ENCODE measurements at regions of chr5 and their contacts with region 1.

Region 1: GRCh38 chr5:56270568-56271392 is 37.6 kb upstream of the ANKRD55 start:
- DNase-seq: peak; percentile 82
- H3K4me3 Mint-ChIP-seq: no peak overlapping the region
- H3K27ac Mint-ChIP-seq: peak overlapping the region; percentile 0
- H3K4me1 Mint-ChIP-seq: peaks cover 17% of the 10 kb centered on the region
- H3K27me3 Mint-ChIP-seq: peaks cover 6% of the 10 kb centered on the region

Region 2: DNA sequence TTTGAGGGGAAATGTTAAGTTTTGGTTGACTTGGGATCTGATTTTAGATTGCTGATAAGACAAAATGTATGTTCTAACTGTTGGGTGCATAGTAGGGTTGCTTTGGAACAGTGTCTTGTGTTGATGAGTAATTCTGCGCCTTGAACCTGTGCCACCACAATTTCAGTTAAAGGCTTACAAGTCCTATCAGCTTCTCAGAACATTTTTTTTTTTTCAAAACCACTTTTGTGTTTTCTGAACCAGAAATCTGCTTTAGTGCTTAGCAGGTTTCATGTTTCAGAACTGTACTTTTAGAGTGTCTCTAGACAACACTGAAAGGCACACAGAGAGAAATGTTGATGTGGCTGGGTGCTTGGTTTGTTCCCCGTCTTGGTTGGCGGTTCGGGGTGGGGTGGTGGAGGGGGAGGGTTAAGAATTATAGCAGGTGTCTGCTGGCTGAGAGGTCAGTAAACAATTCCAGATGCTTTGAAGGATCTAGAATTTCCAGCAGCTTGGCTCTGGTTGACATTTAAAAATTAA is 122.3 kb before region 1 on chr5:
- CTCF ChIA-PET with region 1: no interaction called
- POLR2A ChIA-PET with region 1: no interaction called
- DNase-seq: peak; percentile 61
- H3K4me3 Mint-ChIP-seq: no peak overlapping the region
- H3K27ac Mint-ChIP-seq: peak overlapping the region; percentile 67
- H3K4me1 Mint-ChIP-seq: peaks cover 45% of the 10 kb centered on the region
- H3K27me3 Mint-ChIP-seq: peaks cover 2% of the 10 kb centered on the region

Region 3: DNA sequence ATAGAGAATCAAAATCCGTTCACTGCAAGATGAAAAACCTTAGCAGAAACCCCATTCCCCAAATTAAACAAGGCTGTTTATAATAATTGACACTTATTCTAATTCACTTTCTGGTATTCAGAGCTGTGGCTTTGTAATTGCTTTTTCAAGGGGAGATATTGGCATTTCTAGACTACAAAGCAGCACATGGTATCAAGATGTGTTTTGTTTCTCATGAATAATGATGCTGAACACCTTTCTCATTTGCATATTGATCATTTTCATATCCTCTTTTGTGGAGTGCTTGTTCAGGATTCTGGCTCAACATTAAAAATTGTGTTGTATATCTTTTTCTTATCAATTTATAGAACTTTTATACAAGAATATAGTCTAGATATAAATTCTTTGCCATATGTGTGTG is 15.3 kb before region 1 on chr5:
- CTCF ChIA-PET with region 1: no interaction called
- POLR2A ChIA-PET with region 1: no interaction called
- DNase-seq: no peak
- H3K4me3 Mint-ChIP-seq: no peak overlapping the region
- H3K27ac Mint-ChIP-seq: no peak overlapping the region
- H3K4me1 Mint-ChIP-seq: no peaks in the 10 kb centered on the region
- H3K27me3 Mint-ChIP-seq: peaks cover 9% of the 10 kb centered on the region

Region 4: GRCh38 chr5:56670118-56670483 is 399.3 kb after region 1 on chr5:
- CTCF ChIA-PET with region 1: interaction called, 10 read pairs
- POLR2A ChIA-PET with region 1: no interaction called
- DNase-seq: peak; percentile 68
- H3K4me3 Mint-ChIP-seq: no peak overlapping the region
- H3K27ac Mint-ChIP-seq: peak overlapping the region; percentile 87
- H3K4me1 Mint-ChIP-seq: peaks cover 52% of the 10 kb centered on the region
- H3K27me3 Mint-ChIP-seq: peaks cover 2% of the 10 kb centered on the region

Region 5: DNA sequence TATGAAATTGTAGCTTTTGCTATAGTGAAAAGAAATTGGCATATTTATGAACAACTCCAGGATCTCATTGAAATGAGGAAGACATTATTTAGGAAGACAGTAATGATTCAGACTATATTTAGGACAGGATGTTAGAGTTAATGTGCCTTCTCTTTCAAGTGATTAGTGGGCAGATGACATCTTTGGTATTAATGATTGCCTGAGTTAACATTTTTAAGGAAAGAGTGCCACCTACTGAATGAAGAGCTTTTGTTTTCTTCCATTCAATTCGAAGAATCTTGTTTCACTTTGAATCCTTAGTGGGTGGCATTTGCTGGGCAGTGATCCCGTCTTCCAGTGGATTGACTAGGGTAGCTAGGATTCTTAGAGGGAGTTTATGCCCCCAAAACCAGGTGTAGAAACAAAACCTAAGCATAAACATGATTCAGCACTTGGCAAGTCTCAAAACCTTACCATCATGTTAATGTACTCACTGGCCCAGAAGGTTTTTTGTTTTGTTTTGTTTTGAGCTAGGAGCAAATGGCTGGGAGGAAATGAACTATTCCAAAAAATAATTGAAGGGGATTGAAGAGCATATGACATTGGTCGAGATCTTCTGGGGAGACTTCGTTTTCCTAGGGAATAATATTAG is 567.7 kb after region 1 on chr5:
- CTCF ChIA-PET with region 1: interaction called, 161 read pairs
- POLR2A ChIA-PET with region 1: interaction called, 31 read pairs
- DNase-seq: no peak
- H3K4me3 Mint-ChIP-seq: peak overlapping the region; percentile 33
- H3K27ac Mint-ChIP-seq: peak overlapping the region; percentile 50
- H3K4me1 Mint-ChIP-seq: peaks cover 66% of the 10 kb centered on the region
- H3K27me3 Mint-ChIP-seq: no peaks in the 10 kb centered on the region

Region 6: DNA sequence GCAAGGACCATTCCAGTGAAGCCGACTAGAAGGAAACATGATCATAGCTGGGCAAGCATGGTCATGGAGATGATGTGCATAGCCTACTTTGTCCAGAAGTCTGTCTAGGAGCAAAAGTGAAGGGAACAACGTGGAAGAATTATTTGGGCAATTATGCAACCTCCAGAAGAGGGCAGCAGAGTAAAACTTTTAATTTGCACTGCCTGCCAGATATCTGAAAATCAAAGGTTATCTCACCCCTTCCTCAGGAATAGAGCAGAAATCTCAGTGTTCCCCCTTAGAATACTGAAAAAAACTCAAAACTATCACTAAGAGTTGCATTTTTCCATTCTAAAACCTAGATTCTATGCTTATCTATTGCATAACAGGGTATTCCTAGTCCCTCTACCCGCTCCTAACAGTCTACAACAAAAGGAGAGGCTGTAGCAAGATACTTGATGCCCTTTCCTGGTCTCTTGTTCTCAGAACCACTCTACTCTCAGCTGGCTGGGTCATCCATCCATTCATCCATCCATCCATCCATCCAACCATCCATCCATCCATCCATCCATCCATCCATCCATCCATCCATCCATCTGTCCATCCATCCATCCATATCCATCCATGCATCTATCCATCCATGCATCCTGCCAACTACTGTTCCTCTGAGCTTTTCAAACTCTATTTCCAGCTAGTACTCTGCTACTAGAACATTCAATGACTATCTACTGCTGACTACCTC is 630.2 kb after region 1 on chr5:
- CTCF ChIA-PET with region 1: interaction called, 12 read pairs
- POLR2A ChIA-PET with region 1: no interaction called
- DNase-seq: peak; percentile 25
- H3K4me3 Mint-ChIP-seq: no peak overlapping the region
- H3K27ac Mint-ChIP-seq: no peak overlapping the region
- H3K4me1 Mint-ChIP-seq: no peaks in the 10 kb centered on the region
- H3K27me3 Mint-ChIP-seq: peaks cover 9% of the 10 kb centered on the region

Measured in activated CD4-positive, alpha-beta memory T cell treated with anti-CD3 and anti-CD28 coated beads, Interleukin-2, amount 10 ng/mL, durations not matched to agents 7 days and 5 days (primary cell).